GM10248 (cell line): ENCODE measurements at regions of chr9 and their contacts with region 1.

Region 1: GRCh38 chr9:113591001-113591898 is 127.7 kb downstream of the RGS3 start:
- DNase-seq: peak; percentile 77
- CTCF ChIP-seq: peak; percentile 88

Region 2: GRCh38 chr9:113401027-113401792 is 190.0 kb before region 1 on chr9 and contains the start of gene ALAD:
- CTCF ChIA-PET with region 1: interaction called, 15 read pairs
- POLR2A ChIA-PET with region 1: no interaction called
- DNase-seq: peak; percentile 100
- CTCF ChIP-seq: peak; percentile 93

Region 3: GRCh38 chr9:113446323-113446740 is 144.9 kb before region 1 on chr9:
- CTCF ChIA-PET with region 1: interaction called, 45 read pairs
- POLR2A ChIA-PET with region 1: no interaction called
- DNase-seq: peak; percentile 74
- CTCF ChIP-seq: peak; percentile 53

Region 4: GRCh38 chr9:113463418-113464285 is 127.6 kb before region 1 on chr9 and contains the start of gene RGS3:
- CTCF ChIA-PET with region 1: no interaction called
- POLR2A ChIA-PET with region 1: no interaction called
- DNase-seq: no peak
- CTCF ChIP-seq: no peak

Region 5: DNA sequence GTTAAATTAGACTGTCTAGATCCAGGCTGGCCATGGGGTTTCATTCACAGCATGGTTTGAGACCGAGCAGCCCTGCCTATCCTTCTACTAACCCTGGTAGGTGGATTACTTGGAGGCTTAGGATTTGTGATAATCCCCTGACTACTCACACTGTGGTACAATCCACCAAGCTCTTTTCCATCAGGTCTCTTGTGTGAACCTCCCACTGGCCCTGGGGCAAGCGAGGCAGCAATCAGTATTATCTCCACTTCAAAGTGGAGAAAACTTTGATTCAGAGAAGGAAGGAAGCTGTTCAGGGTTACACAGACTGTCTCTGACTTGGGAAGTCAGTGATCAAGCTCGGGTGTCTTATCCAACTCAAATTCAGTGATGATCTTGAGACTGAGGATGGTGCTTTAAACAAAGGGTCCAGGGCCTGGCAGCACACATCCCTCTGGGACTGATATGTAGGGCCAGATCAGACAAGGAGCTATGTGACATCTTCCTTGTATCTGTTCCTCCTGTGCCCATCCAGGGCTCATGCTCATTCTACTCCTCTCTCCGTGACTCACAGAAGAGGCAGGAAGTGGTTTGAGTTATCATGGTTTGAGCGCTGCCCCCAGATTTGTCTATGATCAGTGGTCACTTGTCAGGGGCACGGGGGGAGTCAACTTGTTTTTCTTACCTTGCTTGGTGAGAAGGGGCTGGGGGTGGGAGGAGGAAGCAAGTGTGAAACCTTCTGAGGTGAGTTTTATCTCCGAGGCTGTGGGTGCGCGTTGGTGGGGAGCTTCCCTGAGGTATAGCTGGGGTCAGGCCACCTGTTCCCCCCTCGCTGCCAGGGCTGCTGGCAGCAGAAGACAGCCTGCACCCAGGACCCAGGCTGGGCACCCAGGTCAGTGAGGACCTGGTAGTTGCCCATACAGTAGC is 79.1 kb before region 1 on chr9:
- CTCF ChIA-PET with region 1: interaction called, 10 read pairs
- POLR2A ChIA-PET with region 1: interaction called, 6 read pairs
- DNase-seq: peak; percentile 81
- CTCF ChIP-seq: no peak

Region 6: DNA sequence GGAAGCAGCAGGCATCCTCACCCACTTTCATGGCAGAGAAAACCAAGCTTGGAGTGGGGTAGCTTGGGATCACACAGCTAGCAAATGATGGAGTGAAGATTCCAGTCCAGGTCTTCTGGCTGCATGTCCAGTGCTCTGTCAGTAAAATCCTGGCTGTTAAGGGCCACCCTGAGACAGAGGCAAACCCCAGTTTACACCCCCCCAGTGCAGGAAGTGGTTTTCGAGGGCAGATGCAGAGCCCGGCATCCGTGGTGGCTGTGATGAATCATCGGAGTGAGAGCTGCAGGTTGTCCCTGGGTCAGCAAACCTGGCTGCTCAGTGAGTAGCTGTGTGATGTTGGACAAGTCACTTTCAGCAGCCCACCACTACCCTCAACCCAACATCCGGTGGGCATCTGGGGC is 12.4 kb before region 1 on chr9:
- CTCF ChIA-PET with region 1: interaction called, 41 read pairs
- POLR2A ChIA-PET with region 1: interaction called, 3 read pairs
- DNase-seq: peak; percentile 87
- CTCF ChIP-seq: no peak

Region 7: DNA sequence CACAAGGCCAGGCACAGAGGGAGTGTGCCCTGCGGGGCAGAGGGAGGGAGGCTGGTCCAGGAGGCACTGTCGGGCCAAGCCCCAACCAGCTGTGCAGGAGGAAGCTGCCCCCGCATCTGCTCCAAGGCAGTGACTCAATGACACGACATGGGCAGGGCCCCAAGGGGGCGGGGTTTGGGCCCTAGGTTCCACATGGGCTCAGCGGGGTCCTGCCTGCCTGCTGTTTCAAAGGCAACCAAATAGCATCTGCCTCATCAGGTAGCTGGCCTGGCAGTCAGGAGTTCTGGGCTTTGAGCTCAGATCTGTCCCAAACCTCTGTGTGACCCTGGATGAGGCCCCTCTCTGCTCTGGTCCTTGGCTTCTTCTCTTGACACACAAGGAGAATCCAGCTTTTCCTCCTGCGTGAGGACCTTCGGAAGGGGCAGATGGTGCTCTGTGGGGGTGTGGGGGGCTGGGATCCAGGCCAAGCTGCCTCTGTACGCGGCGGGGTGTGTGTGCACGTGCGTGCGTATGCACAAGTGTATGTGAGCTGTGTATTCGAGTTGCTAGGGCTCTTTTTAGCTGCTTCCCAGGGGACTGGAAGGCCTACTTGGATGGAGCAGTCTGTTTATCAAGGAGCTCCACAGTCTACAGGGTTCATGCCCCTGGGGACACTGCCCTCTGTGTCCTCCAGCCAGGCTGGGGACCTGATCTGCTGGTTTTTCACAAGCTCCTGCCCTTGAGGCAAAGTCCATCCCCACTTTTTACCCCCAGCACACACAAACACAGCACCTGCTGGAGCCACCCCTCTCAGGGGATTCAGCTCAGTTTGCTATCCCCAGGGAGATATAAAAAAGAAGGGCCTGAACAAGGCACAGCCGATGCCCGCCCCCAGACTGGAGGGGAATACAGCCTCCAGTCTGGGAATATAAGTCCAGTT is 11.1 kb after region 1 on chr9:
- CTCF ChIA-PET with region 1: interaction called, 48 read pairs
- POLR2A ChIA-PET with region 1: interaction called, 4 read pairs
- DNase-seq: peak; percentile 83
- CTCF ChIP-seq: no peak

Region 8: GRCh38 chr9:113622600-113623400 is 31.6 kb after region 1 on chr9:
- CTCF ChIA-PET with region 1: interaction called, 12 read pairs
- POLR2A ChIA-PET with region 1: no interaction called
- DNase-seq: peak; percentile 76
- CTCF ChIP-seq: no peak